Spleen (tissue), 13 donors: ENCODE measurements at regions of chr10 and their contacts with region 1.

Region 1: GRCh38 chr10:131885391-131886161 is 15.2 kb upstream of the PPP2R2D start:
- DNase-seq: peak; percentile 94
- H3K4me3 ChIP-seq: no peak overlapping the region
- H3K27ac ChIP-seq: no peak overlapping the region
- H3K4me1 ChIP-seq: peaks cover 0 to 9% (median 6%) of the 10 kb centered on the region in 6 donors
- H3K27me3 ChIP-seq: peaks cover 0 to 45% (median 0%) of the 10 kb centered on the region in 7 donors
- CTCF ChIP-seq: peak; percentile 90 to 97 (median 95)
- POLR2A ChIP-seq: no peak

Region 2: GRCh38 chr10:131972474-131973071 is 87.0 kb after region 1 on chr10:
- intact Hi-C with region 1: no loop called
- DNase-seq: peak; percentile 86
- H3K4me3 ChIP-seq: peak overlapping the region in 3 of 8 donors; percentile 4 to 32 (median 4)
- H3K27ac ChIP-seq: peak overlapping the region; percentile 6 to 71 (median 58)
- H3K4me1 ChIP-seq: peaks cover 8 to 57% (median 20%) of the 10 kb centered on the region in 6 donors
- H3K27me3 ChIP-seq: no peaks in the 10 kb centered on the region
- CTCF ChIP-seq: no peak
- POLR2A ChIP-seq: no peak

Region 3: GRCh38 chr10:132023092-132023811 is 137.7 kb after region 1 on chr10:
- intact Hi-C with region 1: loop called (anchors 2 kb)
- DNase-seq: peak; percentile 93
- H3K4me3 ChIP-seq: peak overlapping the region; percentile 0 to 49 (median 18)
- H3K27ac ChIP-seq: no peak overlapping the region
- H3K4me1 ChIP-seq: peaks cover 0 to 20% (median 12%) of the 10 kb centered on the region in 6 donors
- H3K27me3 ChIP-seq: peaks cover 0 to 47% (median 7%) of the 10 kb centered on the region in 7 donors
- CTCF ChIP-seq: peak; percentile 57 to 94 (median 87)
- POLR2A ChIP-seq: no peak

Region 4: GRCh38 chr10:132133005-132133404 is 247.4 kb after region 1 on chr10:
- intact Hi-C with region 1: loop called (anchors 10 kb)
- DNase-seq: peak; percentile 54
- H3K4me3 ChIP-seq: no peak overlapping the region
- H3K27ac ChIP-seq: no peak overlapping the region
- H3K4me1 ChIP-seq: peaks cover 0 to 8% (median 0%) of the 10 kb centered on the region in 6 donors
- H3K27me3 ChIP-seq: peaks cover 0 to 51% (median 3%) of the 10 kb centered on the region in 7 donors
- CTCF ChIP-seq: no peak
- POLR2A ChIP-seq: no peak